GM12878 (cell line): ENCODE measurements at regions of chr2 and their contacts with region 1.

Region 1: GRCh38 chr2:127479219-127479825 is 47.0 kb downstream of the IWS1 start:
- DNase-seq: peak; percentile 11
- ATAC-seq: peak; percentile 86
- H3K4me3 ChIP-seq: no peak overlapping the region
- H3K27ac ChIP-seq: no peak overlapping the region
- H3K4me1 ChIP-seq: no peaks in the 10 kb centered on the region
- H3K27me3 ChIP-seq: no peaks in the 10 kb centered on the region
- CTCF ChIP-seq: peak; percentile 52 to 69 (median 67)
- EP300 ChIP-seq: no peak
- POLR2A ChIP-seq: no peak
- RAD21 ChIP-seq: peak; percentile 80

Region 2: GRCh38 chr2:127324635-127325034 is 154.7 kb before region 1 on chr2:
- CTCF ChIA-PET with region 1: interaction called, 19 read pairs
- POLR2A ChIA-PET with region 1: no interaction called
- RAD21 ChIA-PET with region 1: interaction called, 12 read pairs
- SMC1A ChIA-PET with region 1: interaction called, 8 read pairs
- in situ Hi-C with region 1: no loop called
- intact Hi-C with region 1: loop called (anchors 2 kb)
- DNase-seq: no peak
- ATAC-seq: no peak
- H3K4me3 ChIP-seq: no peak overlapping the region
- H3K27ac ChIP-seq: no peak overlapping the region
- H3K4me1 ChIP-seq: no peaks in the 10 kb centered on the region
- H3K27me3 ChIP-seq: no peaks in the 10 kb centered on the region
- CTCF ChIP-seq: peak; percentile 28 to 48 (median 38); a peak in 3 of 6 replicates
- EP300 ChIP-seq: no peak
- POLR2A ChIP-seq: no peak
- RAD21 ChIP-seq: peak; percentile 56

Region 3: GRCh38 chr2:127365211-127365643 is 114.1 kb before region 1 on chr2:
- CTCF ChIA-PET with region 1: interaction called, 13 read pairs
- POLR2A ChIA-PET with region 1: no interaction called
- RAD21 ChIA-PET with region 1: interaction called, 3 read pairs
- SMC1A ChIA-PET with region 1: interaction called, 3 read pairs
- in situ Hi-C with region 1: no loop called
- intact Hi-C with region 1: no loop called
- DNase-seq: no peak
- ATAC-seq: peak; percentile 36
- H3K4me3 ChIP-seq: no peak overlapping the region
- H3K27ac ChIP-seq: no peak overlapping the region
- H3K4me1 ChIP-seq: peaks cover 3% of the 10 kb centered on the region; the same call in 1 of the 2 replicates
- H3K27me3 ChIP-seq: no peaks in the 10 kb centered on the region
- CTCF ChIP-seq: no peak
- EP300 ChIP-seq: no peak
- POLR2A ChIP-seq: no peak
- RAD21 ChIP-seq: no peak

Region 4: GRCh38 chr2:127453392-127454171 is 25.7 kb before region 1 on chr2:
- CTCF ChIA-PET with region 1: interaction called, 10 read pairs
- POLR2A ChIA-PET with region 1: no interaction called
- RAD21 ChIA-PET with region 1: no interaction called
- SMC1A ChIA-PET with region 1: interaction called, 3 read pairs
- in situ Hi-C with region 1: no loop called
- intact Hi-C with region 1: no loop called
- DNase-seq: no peak
- ATAC-seq: peak; percentile 66
- H3K4me3 ChIP-seq: no peak overlapping the region
- H3K27ac ChIP-seq: no peak overlapping the region
- H3K4me1 ChIP-seq: no peaks in the 10 kb centered on the region; the same call in 1 of the 2 replicates
- H3K27me3 ChIP-seq: no peaks in the 10 kb centered on the region
- CTCF ChIP-seq: peak; percentile 30 to 35 (median 34); a peak in 3 of 6 replicates
- EP300 ChIP-seq: no peak
- POLR2A ChIP-seq: no peak
- RAD21 ChIP-seq: peak; percentile 46